Right cardiac atrium (tissue), 5 donors: ENCODE measurements at regions of chr5 and their contacts with region 1.

Region 1: DNA sequence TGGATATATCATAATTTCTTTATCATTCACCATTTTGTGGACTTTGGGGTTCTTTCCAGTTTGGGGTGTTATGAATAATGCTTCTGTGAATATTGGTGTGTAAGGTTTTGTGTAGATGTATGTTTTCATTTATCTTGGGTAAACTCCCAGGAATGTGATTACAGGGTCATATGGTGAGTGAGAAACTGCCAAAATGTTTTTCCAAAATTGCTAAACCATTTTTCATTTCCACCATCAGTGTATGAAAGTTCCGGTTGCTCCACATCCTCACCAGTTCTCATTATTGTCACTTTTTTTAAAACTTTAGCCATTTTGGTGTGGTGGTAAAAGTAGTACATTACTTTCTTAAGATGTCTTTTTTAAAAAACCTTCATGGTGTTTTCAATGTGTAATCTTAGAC is 152.9 kb downstream of the NIPBL start:
- DNase-seq: no peak
- ATAC-seq: no peak
- H3K4me3 ChIP-seq: no peak overlapping the region
- H3K27ac ChIP-seq: no peak overlapping the region
- H3K4me1 ChIP-seq: no peaks in the 10 kb centered on the region
- H3K27me3 ChIP-seq: no peaks in the 10 kb centered on the region

Region 2: GRCh38 chr5:37146896-37147295 is 117.5 kb after region 1 on chr5:
- intact Hi-C with region 1: no loop called
- DNase-seq: no peak
- ATAC-seq: no peak
- H3K4me3 ChIP-seq: no peak overlapping the region
- H3K27ac ChIP-seq: no peak overlapping the region
- H3K4me1 ChIP-seq: no peaks in the 10 kb centered on the region
- H3K27me3 ChIP-seq: no peaks in the 10 kb centered on the region

Region 3: DNA sequence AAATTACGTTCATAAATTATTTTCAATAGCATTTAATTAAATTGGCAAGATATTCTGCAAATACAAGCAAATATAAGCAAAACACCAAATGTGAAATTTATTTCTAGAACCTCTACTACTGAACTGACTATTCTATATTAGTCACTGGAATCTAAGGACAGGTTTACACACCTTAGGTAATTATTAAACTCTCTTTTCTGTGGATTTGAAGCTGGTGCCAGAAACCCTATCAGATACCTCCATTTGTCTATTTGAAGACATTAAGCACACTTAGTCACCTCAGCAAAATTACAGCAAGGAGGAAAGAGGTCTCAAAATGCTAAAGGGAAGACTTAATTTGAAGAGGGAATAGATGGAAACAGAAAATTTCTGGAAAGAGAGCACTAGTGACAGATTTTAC is 136.3 kb after region 1 on chr5:
- intact Hi-C with region 1: loop called in 1 of 4 experiments (anchors 10 kb)
- DNase-seq: no peak
- ATAC-seq: no peak
- H3K4me3 ChIP-seq: no peak overlapping the region
- H3K27ac ChIP-seq: no peak overlapping the region
- H3K4me1 ChIP-seq: no peaks in the 10 kb centered on the region
- H3K27me3 ChIP-seq: no peaks in the 10 kb centered on the region